ENCODE measurements at regions of chrX and their contacts with region 1.

Region 1: GRCh38 chrX:130339408-130340222 is at the start of gene SLC25A14:
- DNase-seq: peak; percentile 33 to 79 (median 72)
- ATAC-seq: peak; percentile 94
- H3K4me3 ChIP-seq: peak within 1 kb of the TSS; percentile 90
- H3K4me3 Mint-ChIP-seq: peak within 1 kb of the TSS; percentile 89 to 99 (median 94)
- H3K27ac ChIP-seq: peak within 1 kb of the TSS; percentile 68
- H3K27ac Mint-ChIP-seq: peak within 1 kb of the TSS; percentile 80 to 95 (median 90)
- H3K4me1 ChIP-seq: peaks cover 4 to 5% of the 10 kb centered on the region in 2 donors
- H3K4me1 Mint-ChIP-seq: peaks cover 7 to 25% (median 21%) of the 10 kb centered on the region in 7 donors
- H3K27me3 ChIP-seq: no peaks in the 10 kb centered on the region
- H3K27me3 Mint-ChIP-seq: no peaks in the 10 kb centered on the region
- total RNA-seq, gene SLC25A14: 10.7 to 14.3 (median 13.8) TPM

Region 2: DNA sequence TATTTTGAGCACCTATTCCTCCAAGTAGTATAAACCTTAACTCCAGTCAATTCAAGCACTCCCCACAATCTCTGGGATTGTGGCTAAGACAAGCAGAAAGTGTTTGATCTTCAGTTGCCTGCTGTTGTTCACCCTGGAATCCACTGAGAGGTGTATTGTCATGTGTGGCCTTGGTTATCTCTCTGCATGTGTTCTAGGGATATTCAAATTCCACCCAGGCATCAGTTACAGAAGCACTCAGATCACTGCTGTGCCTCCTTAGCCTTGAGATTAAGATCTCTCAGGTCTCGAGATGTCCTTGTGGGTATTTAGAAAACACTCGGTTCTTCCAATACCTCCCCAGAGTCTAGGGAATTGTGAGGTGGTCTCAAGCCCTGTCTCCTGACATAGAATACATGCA is 1029.6 kb before region 1 on chrX:
- CTCF ChIA-PET with region 1: no interaction called
- POLR2A ChIA-PET with region 1: no interaction called
- intact Hi-C with region 1: no loop called
- DNase-seq: no peak
- ATAC-seq: no peak
- H3K4me3 ChIP-seq: no peak overlapping the region
- H3K4me3 Mint-ChIP-seq: no peak overlapping the region
- H3K27ac ChIP-seq: no peak overlapping the region
- H3K27ac Mint-ChIP-seq: no peak overlapping the region
- H3K4me1 ChIP-seq: no peaks in the 10 kb centered on the region
- H3K4me1 Mint-ChIP-seq: no peaks in the 10 kb centered on the region
- H3K27me3 ChIP-seq: no peaks in the 10 kb centered on the region
- H3K27me3 Mint-ChIP-seq: no peaks in the 10 kb centered on the region

Region 3: DNA sequence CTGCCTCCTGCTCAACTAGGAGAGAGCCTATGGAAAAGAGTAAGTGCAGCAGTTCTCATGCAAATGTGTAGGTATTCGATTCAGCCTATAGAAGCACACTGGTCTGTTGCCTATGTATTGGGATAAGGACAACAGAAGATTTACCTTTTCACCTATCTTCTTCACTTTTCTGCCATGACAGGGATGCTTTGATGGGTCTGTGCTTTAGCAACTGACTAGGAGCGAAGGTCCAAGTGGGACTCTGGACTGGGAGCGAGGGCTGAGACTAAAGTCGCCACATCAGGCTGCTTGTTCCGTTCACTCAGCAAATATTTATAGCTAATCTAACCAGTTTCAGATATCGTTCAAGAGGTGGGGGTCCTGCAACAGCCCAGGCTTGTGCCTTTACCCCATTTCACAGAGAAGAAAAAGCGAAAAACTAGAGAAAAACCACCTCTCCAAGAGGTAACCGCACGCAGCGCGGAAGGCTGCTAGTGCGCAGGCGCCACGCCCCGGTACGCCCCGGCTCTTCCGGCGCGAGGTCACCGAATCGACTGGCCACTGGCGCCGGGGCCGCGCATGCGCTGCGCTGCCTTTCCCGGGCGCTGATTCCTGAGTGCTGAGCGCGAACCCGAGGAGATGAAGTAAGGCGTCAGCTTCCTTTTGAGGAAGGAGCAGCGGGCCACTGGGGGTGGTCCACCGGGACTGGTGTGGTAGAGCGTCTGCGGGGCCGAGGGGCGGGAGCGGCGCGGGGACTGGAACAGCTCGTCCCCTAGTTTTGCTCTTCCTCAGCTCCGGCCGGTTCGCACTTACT is 62.0 kb after region 1 on chrX and contains the start of gene RBMX2:
- CTCF ChIA-PET with region 1: no interaction called
- POLR2A ChIA-PET with region 1: no interaction called
- intact Hi-C with region 1: loop called (anchors 1 kb)
- DNase-seq: peak; percentile 59 to 76 (median 66)
- ATAC-seq: peak; percentile 94
- H3K4me3 ChIP-seq: peak within 1 kb of the TSS; percentile 95
- H3K4me3 Mint-ChIP-seq: peak within 1 kb of the TSS; percentile 83 to 97 (median 94)
- H3K27ac ChIP-seq: peak within 1 kb of the TSS; percentile 79
- H3K27ac Mint-ChIP-seq: peak within 1 kb of the TSS; percentile 80 to 96 (median 94)
- H3K4me1 ChIP-seq: no peaks in the 10 kb centered on the region
- H3K4me1 Mint-ChIP-seq: peaks cover 0 to 28% (median 22%) of the 10 kb centered on the region in 7 donors
- H3K27me3 ChIP-seq: no peaks in the 10 kb centered on the region
- H3K27me3 Mint-ChIP-seq: peaks cover 0 to 11% (median 5%) of the 10 kb centered on the region in 5 donors
- total RNA-seq, gene RBMX2: 15.9 to 31.4 (median 26.4) TPM

Measured in naive thymus-derived CD4-positive, alpha-beta T cell (primary cell).